Adrenal gland (tissue), 19 donors: ENCODE measurements at regions of chr13 and their contacts with region 1.

Region 1: DNA sequence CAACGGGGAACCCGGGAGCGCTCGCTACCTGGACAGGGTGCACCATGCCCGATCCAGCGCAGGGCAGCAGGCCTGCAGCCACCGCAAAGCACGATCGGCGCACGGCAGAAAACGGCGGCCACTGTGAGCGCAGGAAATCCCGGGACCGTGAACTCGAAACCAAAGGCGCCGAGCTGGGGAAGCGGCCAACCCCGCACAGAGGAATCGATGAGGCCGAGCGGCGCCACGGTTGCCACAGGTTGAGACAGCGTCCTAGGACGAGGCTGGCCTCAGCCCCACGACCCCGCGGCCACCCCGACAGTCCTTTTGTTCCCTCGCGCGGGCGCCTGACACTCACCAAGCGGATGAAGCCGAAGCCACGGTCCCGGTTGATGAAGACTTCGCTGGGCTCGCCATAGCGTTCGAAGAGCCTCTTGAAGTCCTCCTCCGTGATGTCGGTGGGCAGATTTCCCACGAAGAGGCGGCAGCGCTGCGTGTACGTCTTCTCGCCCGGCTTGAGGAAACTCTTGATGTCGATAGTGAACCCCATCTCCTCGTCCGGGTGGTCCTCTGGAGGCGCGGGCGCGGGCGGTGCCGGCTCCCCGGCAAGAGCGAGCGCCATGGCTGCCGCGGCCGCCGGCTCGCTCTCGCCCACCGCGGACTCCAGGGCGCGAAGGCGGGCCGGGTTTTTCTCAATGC is 557 bp downstream of the PSPC1 start:
- DNase-seq: peak; percentile 66 to 79 (median 70)
- H3K4me3 ChIP-seq: peak overlapping the region; percentile 69 to 89 (median 82)
- H3K27ac ChIP-seq: peak overlapping the region; percentile 91 to 95 (median 94)
- H3K4me1 ChIP-seq: peaks cover 7 to 12% of the 10 kb centered on the region in 2 donors
- H3K27me3 ChIP-seq: no peaks in the 10 kb centered on the region
- CTCF ChIP-seq: no peak
- POLR2A ChIP-seq: peak in 1 of 2 donors; percentile 34

Region 2: DNA sequence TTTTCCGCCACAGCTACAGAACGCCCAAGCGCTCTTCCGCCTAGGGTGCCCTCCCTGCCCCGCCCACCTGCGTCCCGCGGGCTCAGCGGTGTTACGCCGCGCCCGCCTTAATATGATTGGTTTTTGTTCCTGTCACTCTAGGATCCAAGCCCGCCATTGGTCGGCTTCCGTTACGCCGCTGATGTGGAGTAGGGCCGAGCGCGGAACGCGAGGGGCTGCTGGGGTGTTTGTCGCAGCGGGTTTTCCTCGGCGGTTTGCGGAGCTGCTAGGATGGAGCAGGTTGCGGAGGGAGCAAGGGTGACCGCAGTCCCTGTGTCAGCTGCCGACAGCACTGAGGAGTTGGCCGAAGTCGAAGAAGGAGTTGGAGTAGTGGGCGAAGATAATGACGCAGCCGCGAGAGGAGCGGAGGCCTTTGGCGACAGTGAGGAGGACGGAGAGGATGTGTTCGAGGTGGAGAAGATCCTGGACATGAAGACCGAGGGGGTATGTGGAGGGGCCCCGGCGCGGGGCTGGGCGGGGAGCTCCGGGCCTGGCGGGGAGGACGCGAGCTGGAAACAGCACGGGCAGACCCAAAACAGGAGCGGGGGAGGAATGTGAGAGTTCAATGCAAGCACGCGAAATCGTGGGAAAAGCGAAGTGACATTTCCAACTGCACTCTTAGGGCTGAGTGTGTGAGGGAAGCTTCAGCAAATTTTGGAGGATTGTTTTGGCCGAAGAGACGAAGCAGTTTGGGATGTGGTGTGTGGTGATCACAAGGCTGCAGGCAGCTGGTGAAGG is 148.5 kb before region 1 on chr13 and contains the start of gene MPHOSPH8:
- intact Hi-C with region 1: loop called in 1 of 2 experiments (anchors 10 kb)
- DNase-seq: peak; percentile 95 to 98 (median 96)
- H3K4me3 ChIP-seq: peak within 1 kb of the TSS; percentile 65 to 99 (median 95)
- H3K27ac ChIP-seq: peak within 1 kb of the TSS; percentile 94 to 99 (median 96)
- H3K4me1 ChIP-seq: peaks cover 23 to 29% of the 10 kb centered on the region in 2 donors
- H3K27me3 ChIP-seq: no peaks in the 10 kb centered on the region
- CTCF ChIP-seq: peak in 1 of 6 experiments; percentile 1
- POLR2A ChIP-seq: peak; percentile 53 to 89
- total RNA-seq, gene MPHOSPH8: 14.7 to 50.8 (median 30.1) TPM

Region 3: DNA sequence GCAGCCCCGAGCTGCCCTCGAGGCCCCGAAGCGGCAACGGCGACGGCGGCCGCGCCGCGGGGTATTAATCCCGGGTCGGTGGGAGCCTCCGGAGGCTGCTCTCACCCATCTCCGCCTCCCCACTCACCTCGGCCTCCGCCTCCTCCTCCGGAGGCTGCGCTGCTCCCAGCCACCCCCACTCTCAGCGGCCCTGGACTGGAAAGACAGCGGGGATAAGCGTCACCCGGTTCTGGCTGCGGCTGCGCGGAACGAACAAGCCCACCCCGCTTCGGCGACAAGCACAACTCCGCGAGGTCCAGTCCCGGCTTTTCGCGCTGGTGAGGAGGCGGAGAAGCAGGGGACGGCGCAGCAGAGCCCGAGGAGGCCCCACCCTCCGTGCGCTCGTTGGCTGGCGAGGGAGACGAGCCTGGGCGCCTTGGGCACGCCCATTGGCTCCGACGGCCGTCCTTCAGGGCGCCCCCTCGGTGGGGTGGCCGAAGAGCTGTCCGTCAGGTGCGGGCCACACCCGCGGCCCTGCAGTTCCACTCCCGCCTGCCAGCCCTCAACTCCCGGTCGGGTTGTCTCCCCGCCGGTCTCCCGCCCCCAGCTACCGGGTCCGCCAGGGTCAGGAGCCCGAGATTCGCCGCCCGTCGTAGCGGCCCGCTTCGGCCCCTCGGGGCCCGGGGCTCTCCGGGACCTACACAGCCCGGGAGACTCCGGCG is 81.3 kb after region 1 on chr13 and contains the start of gene ZMYM5:
- intact Hi-C with region 1: loop called in 1 of 2 experiments (anchors 5 kb)
- DNase-seq: peak; percentile 98 to 99 (median 99)
- H3K4me3 ChIP-seq: peak within 1 kb of the TSS; percentile 76 to 98 (median 86)
- H3K27ac ChIP-seq: peak within 1 kb of the TSS; percentile 95 to 99 (median 98)
- H3K4me1 ChIP-seq: peaks cover 19 to 20% of the 10 kb centered on the region in 2 donors
- H3K27me3 ChIP-seq: no peaks in the 10 kb centered on the region
- CTCF ChIP-seq: peak in 1 of 6 experiments; percentile 3
- POLR2A ChIP-seq: peak; percentile 88 to 99
- total RNA-seq, gene ZMYM5: 6.9 to 24.7 (median 13.1) TPM

Region 4: GRCh38 chr13:20174656-20175405 is 392.6 kb after region 1 on chr13:
- intact Hi-C with region 1: no loop called
- DNase-seq: peak; percentile 72 to 93 (median 89)
- H3K4me3 ChIP-seq: peak overlapping the region in 1 of 4 donors; percentile 19
- H3K27ac ChIP-seq: peak overlapping the region in 2 of 5 donors; percentile 28 to 79
- H3K4me1 ChIP-seq: peaks cover 0 to 2% of the 10 kb centered on the region in 2 donors
- H3K27me3 ChIP-seq: peaks cover 27% of the 10 kb centered on the region
- CTCF ChIP-seq: no peak
- POLR2A ChIP-seq: peak in 1 of 2 donors; percentile 39